ENCODE measurements at regions of chr11 and their contacts with region 1.

Region 1: DNA sequence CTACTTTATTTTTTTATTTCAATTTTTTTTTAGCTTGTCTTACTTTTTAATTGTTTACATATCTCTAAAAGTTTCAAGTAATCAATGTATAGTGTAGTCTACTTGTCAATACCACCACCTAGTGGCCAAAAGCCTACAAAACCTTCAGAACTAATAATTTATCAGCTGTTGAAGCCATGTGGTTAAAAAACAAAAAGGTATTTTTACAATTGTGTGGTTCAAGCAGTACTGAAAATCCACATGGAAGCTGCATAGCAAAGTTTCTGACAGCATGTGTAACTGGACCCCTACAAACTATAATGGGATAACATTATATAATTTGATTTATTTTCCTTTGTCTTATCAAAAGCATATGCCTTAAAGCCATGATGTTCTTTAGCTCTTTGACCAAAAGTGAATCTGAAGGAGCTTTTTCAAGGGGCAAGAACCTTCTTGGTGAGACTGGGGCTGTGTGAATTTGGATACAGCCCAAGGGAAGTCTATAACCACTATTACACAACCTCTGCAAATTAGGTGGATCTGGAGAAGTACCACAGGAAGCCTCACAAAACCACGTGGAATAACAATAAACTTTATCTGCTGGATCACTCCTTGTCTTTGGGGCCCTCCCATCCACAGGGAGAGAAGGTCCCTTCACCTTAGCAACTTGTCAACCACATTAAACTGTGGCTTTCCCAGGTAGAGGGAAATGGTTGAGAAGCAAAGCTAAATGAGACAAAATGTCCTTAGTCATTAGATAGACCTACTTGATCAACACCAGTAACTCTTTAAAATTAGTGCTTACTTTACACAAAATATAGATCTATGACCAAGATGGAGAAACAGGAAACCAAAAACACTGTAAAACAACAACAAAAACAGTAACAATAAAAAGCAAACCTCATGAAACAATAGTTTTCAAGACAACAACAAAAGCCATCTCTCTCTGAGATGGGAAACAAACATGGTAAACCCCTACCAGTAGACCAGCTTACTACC is 9.9 kb downstream of the NARS2 start:
- DNase-seq: peak; percentile 59 to 68 (median 63)
- H3K4me3 ChIP-seq: no peak overlapping the region
- H3K4me3 Mint-ChIP-seq: peak overlapping the region in 1 of 8 donors; percentile 48
- H3K27ac ChIP-seq: no peak overlapping the region
- H3K27ac Mint-ChIP-seq: peak overlapping the region in 5 of 7 donors; percentile 36 to 83 (median 74)
- H3K4me1 ChIP-seq: peaks cover 32% of the 10 kb centered on the region
- H3K4me1 Mint-ChIP-seq: peaks cover 16 to 45% (median 27%) of the 10 kb centered on the region in 4 donors
- H3K27me3 ChIP-seq: no peaks in the 10 kb centered on the region
- H3K27me3 Mint-ChIP-seq: no peaks in the 10 kb centered on the region

Region 2: GRCh38 chr11:77467993-77468392 is 1096.8 kb before region 1 on chr11:
- CTCF ChIA-PET with region 1: no interaction called
- POLR2A ChIA-PET with region 1: no interaction called
- intact Hi-C with region 1: no loop called
- DNase-seq: no peak
- H3K4me3 ChIP-seq: no peak overlapping the region
- H3K4me3 Mint-ChIP-seq: no peak overlapping the region
- H3K27ac ChIP-seq: no peak overlapping the region
- H3K27ac Mint-ChIP-seq: no peak overlapping the region
- H3K4me1 ChIP-seq: peaks cover 4% of the 10 kb centered on the region
- H3K4me1 Mint-ChIP-seq: peaks cover 1 to 8% (median 5%) of the 10 kb centered on the region in 4 donors
- H3K27me3 ChIP-seq: no peaks in the 10 kb centered on the region
- H3K27me3 Mint-ChIP-seq: peaks cover 6 to 20% of the 10 kb centered on the region in 2 donors

Region 3: GRCh38 chr11:78079232-78080083 is 485.3 kb before region 1 on chr11 and contains the start of gene NDUFC2:
- CTCF ChIA-PET with region 1: interaction called, 5 read pairs
- POLR2A ChIA-PET with region 1: no interaction called
- intact Hi-C with region 1: loop called (anchors 10 kb)
- DNase-seq: peak; percentile 60 to 66 (median 64)
- H3K4me3 ChIP-seq: peak within 1 kb of the TSS; percentile 77 to 98
- H3K4me3 Mint-ChIP-seq: peak within 1 kb of the TSS; percentile 93 to 98 (median 96)
- H3K27ac ChIP-seq: peak within 1 kb of the TSS; percentile 75
- H3K27ac Mint-ChIP-seq: peak within 1 kb of the TSS; percentile 87 to 98 (median 96)
- H3K4me1 ChIP-seq: peaks cover 55% of the 10 kb centered on the region
- H3K4me1 Mint-ChIP-seq: peaks cover 34 to 72% (median 49%) of the 10 kb centered on the region in 4 donors
- H3K27me3 ChIP-seq: no peaks in the 10 kb centered on the region
- H3K27me3 Mint-ChIP-seq: no peaks in the 10 kb centered on the region
- total RNA-seq, gene NDUFC2: 80.5 to 86.5 TPM

Region 4: DNA sequence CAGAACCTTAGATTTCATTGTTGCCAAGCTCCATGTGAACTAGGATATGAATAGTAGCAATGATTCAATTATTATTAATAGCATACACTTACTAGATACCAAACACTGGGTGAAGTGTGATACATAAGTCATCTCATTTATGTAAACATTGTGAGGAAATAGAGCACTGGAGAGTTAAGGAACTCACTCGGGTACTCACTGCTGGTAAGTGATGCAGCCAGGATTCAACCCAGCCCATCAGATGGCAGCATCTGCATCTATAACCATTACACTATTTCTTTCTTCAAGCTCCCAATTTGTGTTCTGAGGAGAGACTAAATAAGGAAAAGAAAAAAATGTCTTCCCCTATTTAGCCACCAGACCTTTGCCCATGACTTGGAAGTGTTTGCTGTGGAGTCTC is 415.1 kb before region 1 on chr11:
- CTCF ChIA-PET with region 1: interaction called, 10 read pairs
- POLR2A ChIA-PET with region 1: no interaction called
- intact Hi-C with region 1: no loop called
- DNase-seq: no peak
- H3K4me3 ChIP-seq: no peak overlapping the region
- H3K4me3 Mint-ChIP-seq: no peak overlapping the region
- H3K27ac ChIP-seq: no peak overlapping the region
- H3K27ac Mint-ChIP-seq: no peak overlapping the region
- H3K4me1 ChIP-seq: no peaks in the 10 kb centered on the region
- H3K4me1 Mint-ChIP-seq: no peaks in the 10 kb centered on the region
- H3K27me3 ChIP-seq: no peaks in the 10 kb centered on the region
- H3K27me3 Mint-ChIP-seq: no peaks in the 10 kb centered on the region

Region 5: DNA sequence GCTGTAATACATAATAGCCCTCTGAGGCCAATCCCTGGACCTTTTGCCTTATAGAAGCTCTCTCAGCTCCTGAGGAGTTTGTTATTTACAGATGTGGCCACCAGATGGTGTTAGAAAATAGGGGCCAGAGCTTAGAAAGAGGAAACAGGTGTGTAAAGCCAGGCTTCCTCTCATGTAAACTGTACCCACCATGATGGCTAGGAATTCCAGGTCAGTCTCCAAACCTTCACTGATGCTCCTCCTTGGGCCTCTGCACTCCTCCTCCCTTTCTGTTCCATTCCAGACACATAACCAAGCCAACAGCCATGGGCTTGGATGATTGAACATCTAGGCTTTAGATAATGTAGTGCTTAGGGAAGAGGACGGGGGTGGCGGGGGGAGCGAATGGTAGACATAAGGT is 336.3 kb before region 1 on chr11:
- CTCF ChIA-PET with region 1: interaction called, 37 read pairs
- POLR2A ChIA-PET with region 1: interaction called, 3 read pairs
- intact Hi-C with region 1: loop called (anchors 1 kb)
- DNase-seq: peak in 3 of 5 donors; percentile 9 to 32 (median 13)
- H3K4me3 ChIP-seq: no peak overlapping the region
- H3K4me3 Mint-ChIP-seq: no peak overlapping the region
- H3K27ac ChIP-seq: no peak overlapping the region
- H3K27ac Mint-ChIP-seq: no peak overlapping the region
- H3K4me1 ChIP-seq: no peaks in the 10 kb centered on the region
- H3K4me1 Mint-ChIP-seq: peaks cover 5 to 8% (median 6%) of the 10 kb centered on the region in 4 donors
- H3K27me3 ChIP-seq: no peaks in the 10 kb centered on the region
- H3K27me3 Mint-ChIP-seq: no peaks in the 10 kb centered on the region

Region 6: DNA sequence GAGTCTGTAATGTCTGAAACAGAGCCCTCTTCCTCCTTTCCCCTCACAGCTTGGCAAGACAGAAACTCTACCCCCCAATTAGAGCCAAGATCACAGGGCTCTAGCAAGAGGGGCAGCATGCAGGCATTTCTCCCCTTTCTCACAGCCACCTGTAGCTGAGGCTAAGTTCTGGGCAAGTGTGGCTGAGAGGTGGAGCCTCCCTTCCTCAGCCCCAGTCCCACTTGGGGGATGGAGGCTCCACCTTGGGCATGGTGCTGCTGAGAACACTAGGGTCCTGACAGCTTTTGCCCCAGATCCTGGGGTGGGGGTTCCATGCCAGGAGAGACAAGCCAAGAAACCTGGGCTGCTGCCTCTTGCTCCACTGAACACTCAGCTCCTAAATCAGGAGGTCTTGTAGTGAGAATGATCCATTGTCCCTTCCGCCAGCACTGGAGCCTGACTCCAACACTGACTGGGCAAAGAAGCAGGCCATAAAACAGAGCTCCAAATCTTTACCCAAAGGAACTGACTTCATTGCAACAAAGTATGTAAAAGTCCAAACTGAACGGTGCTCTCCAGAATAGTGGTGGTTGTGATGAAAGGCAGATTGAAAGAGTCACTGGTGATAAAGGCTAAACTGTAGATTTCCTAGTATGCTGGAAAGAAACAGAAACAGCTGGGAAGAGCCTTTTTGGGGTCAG is 15.7 kb before region 1 on chr11:
- CTCF ChIA-PET with region 1: interaction called, 13 read pairs
- POLR2A ChIA-PET with region 1: interaction called, 7 read pairs
- intact Hi-C with region 1: no loop called
- DNase-seq: no peak
- H3K4me3 ChIP-seq: no peak overlapping the region
- H3K4me3 Mint-ChIP-seq: no peak overlapping the region
- H3K27ac ChIP-seq: no peak overlapping the region
- H3K27ac Mint-ChIP-seq: peak overlapping the region in 1 of 7 donors; percentile 50
- H3K4me1 ChIP-seq: no peaks in the 10 kb centered on the region
- H3K4me1 Mint-ChIP-seq: peaks cover 0 to 3% (median under 1%) of the 10 kb centered on the region in 4 donors
- H3K27me3 ChIP-seq: no peaks in the 10 kb centered on the region
- H3K27me3 Mint-ChIP-seq: no peaks in the 10 kb centered on the region

Region 7: GRCh38 chr11:78796998-78797397 is 232.2 kb after region 1 on chr11:
- CTCF ChIA-PET with region 1: no interaction called
- POLR2A ChIA-PET with region 1: no interaction called
- intact Hi-C with region 1: no loop called
- DNase-seq: no peak
- H3K4me3 ChIP-seq: no peak overlapping the region
- H3K4me3 Mint-ChIP-seq: no peak overlapping the region
- H3K27ac ChIP-seq: no peak overlapping the region
- H3K27ac Mint-ChIP-seq: no peak overlapping the region
- H3K4me1 ChIP-seq: no peaks in the 10 kb centered on the region
- H3K4me1 Mint-ChIP-seq: no peaks in the 10 kb centered on the region
- H3K27me3 ChIP-seq: no peaks in the 10 kb centered on the region
- H3K27me3 Mint-ChIP-seq: peaks cover 0 to 4% of the 10 kb centered on the region in 2 donors